ENCODE measurements at regions of chr10 and their contacts with region 1.

Region 1: DNA sequence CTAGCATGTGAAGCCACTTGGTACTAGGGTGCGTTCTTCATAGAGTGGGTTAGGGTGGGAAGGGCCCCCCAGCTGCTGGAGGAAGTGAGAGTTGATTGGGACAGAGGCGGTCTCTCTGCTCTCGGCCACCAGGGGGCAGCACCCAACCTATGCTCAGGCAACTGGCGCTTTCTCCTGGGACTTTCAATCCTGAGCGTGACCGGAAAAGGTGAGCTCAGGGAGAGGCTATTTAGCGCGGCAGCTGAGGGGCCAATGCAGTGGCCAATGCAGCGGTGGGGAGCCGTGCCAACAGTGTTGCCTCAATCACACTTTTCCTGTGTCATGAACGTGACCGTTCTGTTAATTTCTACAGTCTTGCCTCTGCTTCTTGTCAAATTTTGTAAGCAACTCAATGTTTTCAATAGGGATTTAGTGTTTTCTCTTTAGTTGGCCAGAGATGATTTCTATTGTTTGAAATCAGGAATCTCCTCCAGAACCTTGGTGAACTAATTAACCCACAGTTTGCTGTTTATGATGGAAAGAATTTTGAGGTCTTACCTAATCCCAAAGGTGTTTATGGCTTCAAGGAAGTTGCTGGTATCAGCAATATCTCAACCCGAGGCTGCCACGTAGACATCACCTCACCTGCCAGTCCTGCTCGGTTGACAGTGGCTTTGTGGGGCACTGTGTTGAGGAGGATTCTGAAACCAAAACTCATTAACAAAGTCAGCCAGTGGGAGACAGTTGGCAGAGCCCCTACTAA is 67.9 kb upstream of the PDZD8 start:
- DNase-seq: peak; percentile 69
- H3K4me3 ChIP-seq: no peak overlapping the region
- H3K27ac ChIP-seq: no peak overlapping the region
- H3K4me1 ChIP-seq: no peaks in the 10 kb centered on the region
- H3K27me3 ChIP-seq: peaks cover 32% of the 10 kb centered on the region
- CTCF ChIP-seq: peak; percentile 97

Region 2: DNA sequence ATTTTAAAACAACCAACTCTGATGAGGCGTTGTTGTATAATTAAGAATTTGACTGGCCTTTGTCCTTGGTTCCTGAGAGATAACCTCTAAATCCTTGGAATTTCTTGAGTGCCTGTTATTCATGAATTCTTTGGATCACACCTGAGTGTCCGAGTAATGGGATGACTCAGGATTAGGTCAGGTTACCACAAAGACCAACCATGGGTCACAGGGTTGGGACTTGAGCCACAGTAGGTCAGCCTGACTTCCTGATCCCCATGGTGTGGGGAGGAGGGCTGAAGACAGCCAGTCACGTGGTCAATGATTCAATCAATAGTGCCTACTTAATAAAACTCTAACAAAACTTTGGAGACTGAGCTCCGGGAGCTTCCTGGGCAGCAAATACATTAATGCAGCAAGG is 1362.6 kb before region 1 on chr10:
- CTCF ChIA-PET with region 1: no interaction called
- POLR2A ChIA-PET with region 1: no interaction called
- intact Hi-C with region 1: no loop called
- DNase-seq: no peak
- H3K4me3 ChIP-seq: no peak overlapping the region
- H3K27ac ChIP-seq: no peak overlapping the region
- H3K4me1 ChIP-seq: no peaks in the 10 kb centered on the region
- H3K27me3 ChIP-seq: peaks cover 83% of the 10 kb centered on the region
- CTCF ChIP-seq: no peak

Region 3: GRCh38 chr10:116637830-116638229 is 805.3 kb before region 1 on chr10:
- CTCF ChIA-PET with region 1: interaction called, 16 read pairs
- POLR2A ChIA-PET with region 1: no interaction called
- intact Hi-C with region 1: no loop called
- DNase-seq: no peak
- H3K4me3 ChIP-seq: no peak overlapping the region
- H3K27ac ChIP-seq: no peak overlapping the region
- H3K4me1 ChIP-seq: no peaks in the 10 kb centered on the region
- H3K27me3 ChIP-seq: peaks cover 5% of the 10 kb centered on the region
- CTCF ChIP-seq: no peak

Region 4: DNA sequence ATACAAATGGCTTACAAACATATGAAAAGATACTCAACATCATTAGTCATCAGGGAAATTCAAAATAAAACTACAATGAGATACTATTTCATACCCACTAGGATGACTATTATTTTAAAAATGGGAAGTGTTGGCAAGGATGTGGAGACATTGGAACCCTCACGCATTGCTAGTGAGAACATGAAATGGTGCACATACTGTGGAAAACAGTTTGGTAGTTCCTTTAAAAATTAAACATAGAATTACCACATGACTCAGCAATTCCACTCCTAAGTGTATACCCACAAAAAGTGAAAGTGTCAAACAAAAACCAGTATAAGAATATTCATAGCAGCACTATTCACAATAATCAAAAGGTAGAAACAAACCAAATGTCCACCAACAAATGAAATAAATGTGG is 389.6 kb before region 1 on chr10:
- CTCF ChIA-PET with region 1: no interaction called
- POLR2A ChIA-PET with region 1: no interaction called
- intact Hi-C with region 1: no loop called
- DNase-seq: no peak
- H3K4me3 ChIP-seq: no peak overlapping the region
- H3K27ac ChIP-seq: no peak overlapping the region
- H3K4me1 ChIP-seq: no peaks in the 10 kb centered on the region
- H3K27me3 ChIP-seq: no peaks in the 10 kb centered on the region
- CTCF ChIP-seq: no peak